ENCODE measurements at regions of chr10 and their contacts with region 1.

Region 1: GRCh38 chr10:4093438-4093837 is 308.4 kb upstream of the KLF6 start:
- DNase-seq: no peak
- H3K4me3 ChIP-seq: no peak overlapping the region
- H3K4me3 Mint-ChIP-seq: no peak overlapping the region
- H3K27ac ChIP-seq: no peak overlapping the region
- H3K27ac Mint-ChIP-seq: no peak overlapping the region
- H3K4me1 ChIP-seq: no peaks in the 10 kb centered on the region
- H3K4me1 Mint-ChIP-seq: peaks cover 4% of the 10 kb centered on the region
- H3K27me3 ChIP-seq: no peaks in the 10 kb centered on the region
- H3K27me3 Mint-ChIP-seq: no peaks in the 10 kb centered on the region
- CTCF ChIP-seq: no peak

Region 2: GRCh38 chr10:4006051-4006450 is 87.4 kb before region 1 on chr10:
- intact Hi-C with region 1: no loop called
- DNase-seq: peak; percentile 24 to 65 (median 32)
- H3K4me3 ChIP-seq: no peak overlapping the region
- H3K4me3 Mint-ChIP-seq: peak overlapping the region; percentile 29 to 69
- H3K27ac ChIP-seq: peak overlapping the region; percentile 23 to 59
- H3K27ac Mint-ChIP-seq: peak overlapping the region; percentile 23 to 78 (median 50)
- H3K4me1 ChIP-seq: peaks cover 14 to 16% of the 10 kb centered on the region in 2 donors
- H3K4me1 Mint-ChIP-seq: peaks cover 19% of the 10 kb centered on the region
- H3K27me3 ChIP-seq: no peaks in the 10 kb centered on the region
- H3K27me3 Mint-ChIP-seq: peaks cover under 1 to 8% (median 2%) of the 10 kb centered on the region in 3 donors
- CTCF ChIP-seq: no peak

Region 3: GRCh38 chr10:4162571-4163286 is 69.3 kb after region 1 on chr10:
- intact Hi-C with region 1: loop called in 1 of 2 experiments (anchors 10 kb)
- DNase-seq: no peak
- H3K4me3 ChIP-seq: no peak overlapping the region
- H3K4me3 Mint-ChIP-seq: no peak overlapping the region
- H3K27ac ChIP-seq: no peak overlapping the region
- H3K27ac Mint-ChIP-seq: no peak overlapping the region
- H3K4me1 ChIP-seq: no peaks in the 10 kb centered on the region
- H3K4me1 Mint-ChIP-seq: no peaks in the 10 kb centered on the region
- H3K27me3 ChIP-seq: no peaks in the 10 kb centered on the region
- H3K27me3 Mint-ChIP-seq: peaks cover 0 to 2% (median 1%) of the 10 kb centered on the region in 3 donors
- CTCF ChIP-seq: no peak

Measured in CD14-positive monocyte (primary cell).